Heart left ventricle (tissue), 16 donors: ENCODE measurements at regions of chr6 and their contacts with region 1.

Region 1: DNA sequence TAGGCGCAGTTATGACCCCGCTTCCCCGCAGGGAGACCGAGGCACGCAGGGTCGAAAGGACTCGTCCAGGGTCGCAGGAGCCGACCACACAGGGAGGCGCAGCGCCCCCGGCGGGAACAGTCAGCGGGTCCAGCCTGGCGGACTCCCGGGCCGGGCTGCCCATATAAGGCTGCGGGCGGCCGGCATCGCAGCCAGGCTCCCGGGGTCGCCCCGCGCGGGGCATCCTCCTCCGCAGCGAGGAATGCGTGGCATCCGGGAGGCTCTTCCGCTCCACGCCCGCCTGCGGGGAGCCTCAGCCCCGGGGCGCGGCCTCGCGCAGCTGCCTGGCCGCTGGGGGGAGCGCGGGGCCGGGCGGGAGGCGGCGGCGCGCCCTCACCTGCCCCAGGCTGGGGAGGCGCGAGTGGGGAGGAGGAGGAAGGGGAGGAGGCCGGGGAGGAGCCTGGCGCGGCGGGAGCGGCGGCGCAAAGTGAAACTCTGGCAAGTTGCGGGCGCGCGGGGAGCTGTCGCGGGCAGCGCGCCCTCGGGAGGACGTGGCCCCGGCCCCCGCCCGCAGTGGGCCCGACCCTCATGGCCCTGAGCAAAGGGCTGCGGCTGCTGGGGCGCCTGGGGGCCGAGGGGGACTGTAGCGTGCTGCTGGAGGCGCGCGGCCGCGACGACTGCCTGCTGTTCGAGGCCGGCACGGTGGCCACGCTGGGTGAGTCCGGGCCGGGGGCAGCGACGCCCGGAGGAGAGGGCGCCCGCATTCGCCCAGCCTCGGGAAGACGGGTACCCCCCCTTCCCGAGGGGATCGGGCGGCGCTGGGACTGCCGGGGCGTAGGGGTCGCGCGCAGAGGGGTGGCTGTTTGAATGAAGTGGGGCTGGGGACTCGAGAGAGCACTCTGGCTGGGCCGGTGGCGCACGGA is at the start of gene SYNJ2:
- DNase-seq: peak; percentile 80 to 89 (median 86)
- ATAC-seq: peak; percentile 59 to 92 (median 88)
- H3K4me3 ChIP-seq: peak within 1 kb of the TSS; percentile 63 to 100 (median 94)
- H3K27ac ChIP-seq: peak within 1 kb of the TSS in 11 of 12 donors; percentile 63 to 92 (median 78)
- H3K4me1 ChIP-seq: peaks cover 0 to 48% (median 12%) of the 10 kb centered on the region in 12 donors
- H3K27me3 ChIP-seq: no peaks in the 10 kb centered on the region
- CTCF ChIP-seq: peak in 11 of 12 donors; percentile 8 to 79 (median 54)
- POLR2A ChIP-seq: peak in 1 of 2 donors; percentile 54
- total RNA-seq, gene SYNJ2: 7.5 to 27.0 (median 18.2) TPM

Region 2: GRCh38 chr6:158014505-158015187 is 33.0 kb after region 1 on chr6:
- intact Hi-C with region 1: no loop called
- DNase-seq: no peak
- ATAC-seq: no peak
- H3K4me3 ChIP-seq: no peak overlapping the region
- H3K27ac ChIP-seq: no peak overlapping the region
- H3K4me1 ChIP-seq: peaks cover 6 to 54% (median 39%) of the 10 kb centered on the region in 12 donors
- H3K27me3 ChIP-seq: no peaks in the 10 kb centered on the region
- CTCF ChIP-seq: no peak
- POLR2A ChIP-seq: no peak

Region 3: GRCh38 chr6:158026054-158026900 is 44.6 kb after region 1 on chr6:
- intact Hi-C with region 1: loop called in 6 of 10 experiments (anchors 2 to 5 kb)
- DNase-seq: peak; percentile 85 to 92 (median 90)
- ATAC-seq: peak; percentile 68 to 88 (median 82)
- H3K4me3 ChIP-seq: peak overlapping the region in 10 of 12 donors; percentile 8 to 38 (median 21)
- H3K27ac ChIP-seq: peak overlapping the region; percentile 9 to 91 (median 78)
- H3K4me1 ChIP-seq: peaks cover 5 to 56% (median 36%) of the 10 kb centered on the region in 12 donors
- H3K27me3 ChIP-seq: no peaks in the 10 kb centered on the region
- CTCF ChIP-seq: peak; percentile 40 to 70 (median 56)
- POLR2A ChIP-seq: no peak

Region 4: GRCh38 chr6:158031381-158032353 is 50.0 kb after region 1 on chr6:
- intact Hi-C with region 1: loop called in 6 of 10 experiments (anchors 2 to 5 kb)
- DNase-seq: peak; percentile 78 to 88 (median 87)
- ATAC-seq: peak; percentile 70 to 89 (median 77)
- H3K4me3 ChIP-seq: no peak overlapping the region
- H3K27ac ChIP-seq: peak overlapping the region; percentile 11 to 86 (median 68)
- H3K4me1 ChIP-seq: peaks cover 8 to 69% (median 47%) of the 10 kb centered on the region in 12 donors
- H3K27me3 ChIP-seq: no peaks in the 10 kb centered on the region
- CTCF ChIP-seq: no peak
- POLR2A ChIP-seq: no peak

Region 5: GRCh38 chr6:158040051-158040803 is 58.6 kb after region 1 on chr6:
- intact Hi-C with region 1: loop called in 2 of 10 experiments (anchors 5 kb)
- DNase-seq: peak in 1 of 5 donors; percentile 53
- ATAC-seq: peak in 3 of 4 donors; percentile 2 to 28 (median 4)
- H3K4me3 ChIP-seq: no peak overlapping the region
- H3K27ac ChIP-seq: peak overlapping the region; percentile 72 to 98 (median 92)
- H3K4me1 ChIP-seq: peaks cover 8 to 63% (median 49%) of the 10 kb centered on the region in 12 donors
- H3K27me3 ChIP-seq: no peaks in the 10 kb centered on the region
- CTCF ChIP-seq: no peak
- POLR2A ChIP-seq: peak in 1 of 2 donors; percentile 35

Region 6: DNA sequence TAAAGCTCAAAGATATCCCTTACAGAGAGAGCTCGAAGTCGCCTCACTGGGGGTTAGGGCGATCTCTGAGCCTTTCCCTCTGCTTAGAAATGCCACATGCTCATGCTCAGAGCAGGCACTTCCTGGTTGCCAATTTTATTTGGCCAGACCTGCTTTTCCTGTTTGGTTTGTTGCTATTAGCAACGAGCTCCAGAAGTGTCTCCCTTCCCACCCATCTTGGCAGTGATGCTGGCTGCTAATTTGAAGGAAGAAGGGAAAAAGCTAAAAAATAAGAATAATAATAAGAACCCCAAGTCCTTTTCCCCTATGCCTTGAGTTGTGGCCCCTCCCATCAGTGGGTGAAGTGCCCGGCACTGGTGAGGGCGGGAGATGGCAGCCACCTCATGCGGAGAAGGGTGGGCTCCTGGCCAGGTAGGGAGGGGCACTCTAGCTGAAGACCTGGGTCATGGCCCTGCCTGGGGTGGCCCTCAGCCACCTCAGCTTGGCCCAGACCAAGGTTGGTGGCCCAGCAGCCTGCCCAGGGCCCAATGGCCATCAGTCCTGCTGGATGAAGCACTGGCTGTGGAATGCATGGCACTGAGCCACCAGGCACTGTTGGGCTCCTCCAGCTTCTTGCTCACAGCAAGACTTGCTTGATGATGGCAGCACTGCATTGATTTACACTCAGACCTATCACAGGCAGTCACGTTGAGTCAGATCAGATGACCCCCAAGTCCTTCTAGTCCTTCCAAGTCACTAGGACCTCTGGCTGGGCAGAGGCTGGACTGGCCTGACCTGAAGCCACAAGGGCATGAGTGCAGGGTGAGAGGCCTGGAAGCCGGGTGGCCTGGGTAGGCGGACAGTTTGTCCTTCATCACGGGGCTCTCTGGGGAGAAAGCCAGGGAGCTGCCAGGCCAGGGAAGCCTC is 79.1 kb after region 1 on chr6:
- intact Hi-C with region 1: loop called in 1 of 10 experiments (anchors 5 kb)
- DNase-seq: peak; percentile 78 to 91 (median 88)
- ATAC-seq: peak; percentile 73 to 87 (median 84)
- H3K4me3 ChIP-seq: peak overlapping the region in 4 of 12 donors; percentile 2 to 27 (median 8)
- H3K27ac ChIP-seq: peak overlapping the region; percentile 14 to 94 (median 79)
- H3K4me1 ChIP-seq: peaks cover 12 to 51% (median 24%) of the 10 kb centered on the region in 12 donors
- H3K27me3 ChIP-seq: no peaks in the 10 kb centered on the region
- CTCF ChIP-seq: no peak
- POLR2A ChIP-seq: no peak